ENCODE measurements at regions of chrX and their contacts with region 1.

Region 1: GRCh38 chrX:52261463-52262194 is 76.9 kb downstream of the MAGED4 start:
- DNase-seq: peak; percentile 83 to 96
- H3K4me3 ChIP-seq: peak overlapping the region; percentile 59 to 66
- H3K27ac ChIP-seq: peak overlapping the region; percentile 83 to 91
- H3K4me1 ChIP-seq: peaks cover 0 to 5% of the 10 kb centered on the region in 2 donors
- H3K27me3 ChIP-seq: no peaks in the 10 kb centered on the region
- CTCF ChIP-seq: peak; percentile 97 to 99 (median 98)

Region 2: DNA sequence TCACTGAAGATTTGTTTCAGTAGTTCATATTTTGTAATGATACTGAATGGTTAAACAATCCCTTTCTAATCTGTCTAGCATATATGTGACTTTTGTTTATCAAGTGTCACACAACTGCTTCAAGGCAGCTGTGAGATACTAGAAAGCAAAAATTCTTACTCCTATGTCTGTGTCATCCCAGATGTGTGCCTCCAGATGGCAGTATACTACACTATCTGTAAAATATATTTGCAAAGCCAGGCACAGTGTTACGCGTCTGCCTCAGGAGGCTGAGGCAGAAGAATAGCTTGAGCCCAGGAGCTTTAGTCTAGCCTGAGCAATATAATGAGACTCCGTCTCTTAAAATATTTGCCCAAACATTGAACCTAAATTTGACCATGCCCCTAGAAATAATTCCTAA is 925.0 kb before region 1 on chrX:
- intact Hi-C with region 1: loop called (anchors 10 kb)
- DNase-seq: no peak
- H3K4me3 ChIP-seq: no peak overlapping the region
- H3K27ac ChIP-seq: no peak overlapping the region
- H3K4me1 ChIP-seq: no peaks in the 10 kb centered on the region
- H3K27me3 ChIP-seq: no peaks in the 10 kb centered on the region
- CTCF ChIP-seq: peak in 2 of 3 experiments; percentile 8 to 57

Region 3: GRCh38 chrX:51892921-51893745 is 368.5 kb before region 1 on chrX and contains the start of gene MAGED1:
- intact Hi-C with region 1: loop called (anchors 5 kb)
- DNase-seq: peak; percentile 83 to 95
- H3K4me3 ChIP-seq: peak within 1 kb of the TSS; percentile 56 to 73
- H3K27ac ChIP-seq: peak within 1 kb of the TSS; percentile 76 to 85
- H3K4me1 ChIP-seq: peaks cover 0 to 3% of the 10 kb centered on the region in 2 donors
- H3K27me3 ChIP-seq: no peaks in the 10 kb centered on the region
- CTCF ChIP-seq: no peak
- total RNA-seq, gene MAGED1: 74.5 TPM

Region 4: GRCh38 chrX:52995135-52996020 is 733.7 kb after region 1 on chrX:
- intact Hi-C with region 1: loop called (anchors 5 kb)
- DNase-seq: peak; percentile 83 to 96
- H3K4me3 ChIP-seq: peak overlapping the region; percentile 52 to 69
- H3K27ac ChIP-seq: peak overlapping the region; percentile 79 to 81
- H3K4me1 ChIP-seq: peaks cover 0 to 2% of the 10 kb centered on the region in 2 donors
- H3K27me3 ChIP-seq: no peaks in the 10 kb centered on the region
- CTCF ChIP-seq: peak; percentile 47 to 67 (median 62)

Region 5: GRCh38 chrX:53422086-53422860 is 1160.6 kb after region 1 on chrX and contains the start of gene SMC1A:
- intact Hi-C with region 1: loop called (anchors 5 kb)
- DNase-seq: peak; percentile 93 to 99
- H3K4me3 ChIP-seq: peak within 1 kb of the TSS; percentile 73 to 85
- H3K27ac ChIP-seq: peak within 1 kb of the TSS; percentile 91 to 92
- H3K4me1 ChIP-seq: peaks cover 5 to 10% of the 10 kb centered on the region in 2 donors
- H3K27me3 ChIP-seq: no peaks in the 10 kb centered on the region
- CTCF ChIP-seq: no peak
- total RNA-seq, gene SMC1A: 11.2 TPM